ENCODE measurements at regions of chr11 and their contacts with region 1.

Region 1: GRCh38 chr11:61309739-61310138 is 14.6 kb upstream of the VWCE start:
- DNase-seq: no peak
- ATAC-seq: no peak
- H3K4me3 ChIP-seq: no peak overlapping the region
- H3K27ac ChIP-seq: no peak overlapping the region
- H3K4me1 ChIP-seq: no peaks in the 10 kb centered on the region
- H3K27me3 ChIP-seq: no peaks in the 10 kb centered on the region
- CTCF ChIP-seq: no peak
- EP300 ChIP-seq: no peak
- POLR2A ChIP-seq: no peak
- RAD21 ChIP-seq: no peak

Region 2: DNA sequence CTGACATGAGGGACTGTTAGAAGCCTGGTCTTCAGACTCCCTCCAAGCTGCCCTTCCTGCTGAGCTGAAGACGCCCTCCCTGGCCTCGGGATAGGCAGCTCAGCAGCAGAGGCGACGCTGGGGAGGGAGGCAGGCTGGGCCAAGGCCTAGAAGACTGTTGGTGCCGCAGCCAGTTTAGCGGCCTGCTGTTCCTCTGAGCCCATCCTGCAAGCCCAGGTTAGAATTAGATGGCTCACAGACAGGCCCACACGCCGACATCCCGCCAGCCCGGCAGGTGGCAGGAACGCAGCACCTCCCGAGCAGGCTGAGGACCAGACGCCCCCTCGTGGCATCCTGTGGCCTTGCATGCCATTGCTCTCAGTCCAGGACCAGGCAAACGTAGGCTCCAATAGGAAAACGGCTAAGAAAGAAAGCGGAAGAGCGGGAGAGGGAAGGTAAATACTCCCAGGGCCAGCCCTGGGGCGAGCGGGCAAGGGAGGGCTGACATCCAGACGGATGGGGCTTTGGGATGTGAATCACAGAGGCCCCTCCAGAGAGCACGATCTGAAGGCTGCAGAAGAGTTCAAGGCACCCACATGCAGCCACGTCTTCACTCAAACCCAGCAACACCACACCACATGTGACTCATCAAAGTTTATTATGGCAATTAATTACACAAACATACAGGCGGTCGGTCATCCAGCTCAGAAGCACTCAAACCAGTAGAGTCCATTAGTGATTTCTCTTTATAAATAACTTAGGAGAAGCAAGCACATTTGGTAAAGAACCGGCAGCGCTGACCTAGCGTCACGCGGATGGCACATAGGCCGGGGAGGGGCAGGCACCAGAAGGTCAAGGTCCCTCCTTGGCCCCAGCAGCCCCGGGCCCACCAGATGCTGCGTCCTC is 179.9 kb before region 1 on chr11:
- CTCF ChIA-PET with region 1: no interaction called
- POLR2A ChIA-PET with region 1: no interaction called
- in situ Hi-C with region 1: no loop called
- intact Hi-C with region 1: no loop called
- DNase-seq: peak; percentile 91 to 94 (median 94)
- ATAC-seq: peak; percentile 98
- H3K4me3 ChIP-seq: no peak overlapping the region
- H3K27ac ChIP-seq: no peak overlapping the region; the same call in 2 of the 3 replicates
- H3K4me1 ChIP-seq: peaks cover 0 to 20% of the 10 kb centered on the region in 2 experiments; a peak in 2 of 5 replicates
- H3K27me3 ChIP-seq: peaks cover 16 to 23% of the 10 kb centered on the region in 2 experiments
- CTCF ChIP-seq: peak; percentile 100
- EP300 ChIP-seq: peak; percentile 30; the same call in 1 of the 2 replicates
- POLR2A ChIP-seq: no peak; the same call in 1 of the 2 replicates
- RAD21 ChIP-seq: peak; percentile 98 to 99

Region 3: GRCh38 chr11:61297746-61298145 is 12.0 kb before region 1 on chr11:
- CTCF ChIA-PET with region 1: no interaction called
- POLR2A ChIA-PET with region 1: interaction called, 25 read pairs
- in situ Hi-C with region 1: no loop called
- intact Hi-C with region 1: no loop called
- DNase-seq: no peak
- ATAC-seq: no peak
- H3K4me3 ChIP-seq: no peak overlapping the region
- H3K27ac ChIP-seq: no peak overlapping the region
- H3K4me1 ChIP-seq: peaks cover 0 to 25% of the 10 kb centered on the region in 2 experiments; a peak in 2 of 5 replicates
- H3K27me3 ChIP-seq: no peaks in the 10 kb centered on the region
- CTCF ChIP-seq: no peak
- EP300 ChIP-seq: no peak
- POLR2A ChIP-seq: no peak
- RAD21 ChIP-seq: no peak

Region 4: GRCh38 chr11:61327669-61328071 is 17.9 kb after region 1 on chr11:
- CTCF ChIA-PET with region 1: no interaction called
- POLR2A ChIA-PET with region 1: interaction called, 12 read pairs
- in situ Hi-C with region 1: no loop called
- intact Hi-C with region 1: no loop called
- DNase-seq: no peak
- ATAC-seq: no peak
- H3K4me3 ChIP-seq: no peak overlapping the region
- H3K27ac ChIP-seq: no peak overlapping the region
- H3K4me1 ChIP-seq: peaks cover 6 to 9% of the 10 kb centered on the region in 2 experiments; a peak in 4 of 5 replicates
- H3K27me3 ChIP-seq: no peaks in the 10 kb centered on the region
- CTCF ChIP-seq: no peak
- EP300 ChIP-seq: no peak
- POLR2A ChIP-seq: no peak
- RAD21 ChIP-seq: no peak